ENCODE measurements at regions of chr18 and their contacts with region 1.

Region 1: DNA sequence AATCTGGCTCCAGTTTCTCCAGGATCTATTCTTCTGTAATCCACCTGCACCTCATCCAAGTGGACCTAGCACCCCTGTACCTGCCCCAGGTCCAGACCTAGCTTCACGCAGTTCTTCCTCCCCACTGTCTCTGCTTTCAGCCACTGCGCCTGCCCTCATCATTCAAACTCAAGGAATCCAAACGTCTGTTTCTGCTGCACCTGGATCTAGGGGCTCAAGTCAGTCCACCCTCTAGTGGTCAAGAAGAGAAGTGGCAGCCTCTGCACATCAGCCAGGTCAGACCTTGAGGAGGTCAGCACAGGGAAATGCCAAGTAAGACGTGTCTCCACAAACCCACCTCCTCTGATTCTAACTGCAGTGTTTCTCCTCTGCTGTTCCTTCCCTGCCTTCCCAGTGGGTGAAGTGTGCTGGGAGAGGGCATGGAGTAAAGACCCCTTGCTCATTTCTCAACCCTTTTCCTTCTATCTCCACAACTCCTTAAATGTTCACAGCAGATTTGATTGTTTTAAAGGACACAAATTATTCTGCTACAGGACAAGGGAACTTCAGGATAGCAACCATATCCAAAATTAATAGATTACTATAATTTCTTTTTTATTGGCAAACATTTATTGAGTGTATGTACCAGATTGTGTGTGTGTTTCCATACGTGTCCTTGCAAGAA is 8.6 kb upstream of the RNF152 start:
- DNase-seq: peak; percentile 70
- H3K4me3 ChIP-seq: no peak overlapping the region
- H3K27ac ChIP-seq: no peak overlapping the region
- H3K4me1 ChIP-seq: peaks cover 6% of the 10 kb centered on the region; the same call in 1 of the 2 replicates
- H3K27me3 ChIP-seq: no peaks in the 10 kb centered on the region

Region 2: GRCh38 chr18:61635901-61636528 is 265.4 kb before region 1 on chr18:
- in situ Hi-C with region 1: loop called (anchors 10 kb)
- DNase-seq: peak; percentile 75
- H3K4me3 ChIP-seq: no peak overlapping the region
- H3K27ac ChIP-seq: no peak overlapping the region
- H3K4me1 ChIP-seq: no peaks in the 10 kb centered on the region; the same call in 1 of the 2 replicates
- H3K27me3 ChIP-seq: no peaks in the 10 kb centered on the region

Region 3: GRCh38 chr18:62118328-62118727 is 216.9 kb after region 1 on chr18:
- in situ Hi-C with region 1: loop called (anchors 10 kb)
- DNase-seq: peak; percentile 73
- H3K4me3 ChIP-seq: no peak overlapping the region
- H3K27ac ChIP-seq: no peak overlapping the region
- H3K4me1 ChIP-seq: peaks cover 12% of the 10 kb centered on the region
- H3K27me3 ChIP-seq: no peaks in the 10 kb centered on the region

Region 4: GRCh38 chr18:62179213-62179612 is 277.8 kb after region 1 on chr18:
- in situ Hi-C with region 1: no loop called
- DNase-seq: no peak
- H3K4me3 ChIP-seq: no peak overlapping the region
- H3K27ac ChIP-seq: no peak overlapping the region
- H3K4me1 ChIP-seq: no peaks in the 10 kb centered on the region
- H3K27me3 ChIP-seq: no peaks in the 10 kb centered on the region

Region 5: DNA sequence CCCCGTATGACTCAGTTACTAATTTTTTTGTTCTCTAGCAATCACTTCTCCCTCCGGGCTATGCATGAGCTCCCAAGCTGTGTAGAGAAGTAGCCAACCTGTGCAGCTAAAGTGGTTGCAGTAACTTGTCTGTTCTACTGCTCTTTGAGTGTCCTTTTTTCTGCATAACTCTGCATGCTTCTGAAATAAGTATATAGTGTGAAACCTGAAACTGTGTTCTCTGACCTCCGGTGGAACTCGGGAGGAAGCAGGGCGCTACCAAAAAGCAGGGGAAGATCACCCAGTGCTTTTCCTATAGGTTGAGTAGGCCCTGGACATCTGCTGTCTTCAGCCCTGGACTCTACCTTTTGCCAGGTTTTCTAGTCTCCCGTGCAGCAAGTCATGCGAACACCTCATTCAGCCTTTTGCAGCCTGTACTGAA is 861.7 kb after region 1 on chr18:
- in situ Hi-C with region 1: no loop called
- DNase-seq: no peak
- H3K4me3 ChIP-seq: no peak overlapping the region
- H3K27ac ChIP-seq: no peak overlapping the region
- H3K4me1 ChIP-seq: peaks cover 26% of the 10 kb centered on the region
- H3K27me3 ChIP-seq: no peaks in the 10 kb centered on the region